ENCODE measurements at regions of chr22 and their contacts with region 1.

Region 1: GRCh38 chr22:22687638-22688500 is 43.5 kb downstream of the GGTLC2 start:
- DNase-seq: peak; percentile 81
- H3K4me3 Mint-ChIP-seq: no peak overlapping the region
- H3K27ac Mint-ChIP-seq: no peak overlapping the region
- H3K4me1 Mint-ChIP-seq: no peaks in the 10 kb centered on the region
- H3K27me3 Mint-ChIP-seq: no peaks in the 10 kb centered on the region

Region 2: DNA sequence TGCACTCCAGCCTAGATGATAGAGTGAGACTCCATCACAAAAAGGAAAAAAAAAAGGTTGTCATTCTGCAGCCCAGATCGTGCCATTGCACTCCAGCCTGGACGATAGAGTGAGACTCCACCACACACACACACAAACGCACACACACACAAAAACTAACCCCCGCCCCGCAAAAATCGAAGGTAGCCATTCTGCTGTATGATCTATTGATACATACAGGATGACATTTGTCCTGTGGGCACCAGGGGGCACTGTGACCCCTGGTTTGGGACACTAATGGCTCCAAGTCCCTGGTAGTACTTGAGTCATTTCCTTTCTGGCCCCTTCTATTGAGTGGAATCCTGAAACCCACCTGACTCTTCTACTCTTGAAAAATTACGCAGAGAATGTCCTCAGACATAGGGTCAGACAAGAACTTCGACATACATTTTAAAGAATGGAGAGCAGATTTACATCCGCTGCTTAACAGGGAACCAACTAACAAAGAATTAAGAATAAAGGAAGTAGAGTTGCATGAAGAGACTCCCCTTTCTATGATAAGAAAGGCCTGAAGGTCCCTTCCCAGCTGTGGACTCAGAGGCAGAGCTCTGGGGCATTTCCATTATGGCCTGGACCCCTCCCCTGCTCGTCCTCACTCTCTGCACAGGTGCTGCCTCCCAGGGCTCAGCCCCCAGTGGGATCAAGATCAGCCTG is 93.8 kb before region 1 on chr22:
- intact Hi-C with region 1: loop called (anchors 2 kb)
- DNase-seq: peak; percentile 86
- H3K4me3 Mint-ChIP-seq: no peak overlapping the region
- H3K27ac Mint-ChIP-seq: peak overlapping the region; percentile 36
- H3K4me1 Mint-ChIP-seq: peaks cover 2% of the 10 kb centered on the region
- H3K27me3 Mint-ChIP-seq: peaks cover 18% of the 10 kb centered on the region

Measured in activated CD4-positive, alpha-beta T cell treated with anti-CD3 and anti-CD28 coated beads, Interleukin-2, amount 10 ng/mL, durations not matched to agents 24 days and 14 days (primary cell).